Heart right ventricle (tissue), 16 donors: ENCODE measurements at regions of chr9 and their contacts with region 1.

Region 1: GRCh38 chr9:35790385-35791296 is 750 bp upstream of the NPR2 start:
- DNase-seq: peak; percentile 58 to 83
- ATAC-seq: peak; percentile 83 to 94 (median 92)
- H3K4me3 ChIP-seq: peak overlapping the region in 9 of 10 donors; percentile 56 to 78 (median 70)
- H3K27ac ChIP-seq: peak overlapping the region; percentile 2 to 90 (median 82)
- H3K4me1 ChIP-seq: peaks cover 16 to 47% (median 33%) of the 10 kb centered on the region in 9 donors
- H3K27me3 ChIP-seq: peaks cover 0 to 7% (median 0%) of the 10 kb centered on the region in 7 donors
- CTCF ChIP-seq: peak; percentile 71 to 91 (median 84)

Region 2: DNA sequence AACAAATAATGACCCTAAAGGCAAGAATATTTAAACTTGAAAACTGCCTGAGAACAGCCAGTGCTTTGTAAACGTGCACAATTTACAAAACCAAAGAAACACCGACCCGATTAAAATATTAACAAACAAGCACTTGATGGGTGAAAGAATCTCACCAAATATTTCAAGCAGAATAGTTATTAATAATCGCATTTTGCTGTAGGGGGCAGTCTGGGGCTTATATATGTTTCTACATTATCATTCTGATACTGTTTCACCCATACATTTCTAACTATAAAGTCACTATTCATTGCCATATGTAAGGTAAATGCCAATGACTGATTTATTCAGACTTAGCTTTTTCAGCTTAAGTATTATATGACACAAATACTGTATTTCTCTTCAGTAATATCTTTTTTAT is 1779.7 kb before region 1 on chr9:
- intact Hi-C with region 1: no loop called
- DNase-seq: no peak
- ATAC-seq: no peak
- H3K4me3 ChIP-seq: no peak overlapping the region
- H3K27ac ChIP-seq: no peak overlapping the region
- H3K4me1 ChIP-seq: no peaks in the 10 kb centered on the region
- H3K27me3 ChIP-seq: no peaks in the 10 kb centered on the region
- CTCF ChIP-seq: peak in 6 of 9 donors; percentile 28 to 51 (median 38)

Region 3: DNA sequence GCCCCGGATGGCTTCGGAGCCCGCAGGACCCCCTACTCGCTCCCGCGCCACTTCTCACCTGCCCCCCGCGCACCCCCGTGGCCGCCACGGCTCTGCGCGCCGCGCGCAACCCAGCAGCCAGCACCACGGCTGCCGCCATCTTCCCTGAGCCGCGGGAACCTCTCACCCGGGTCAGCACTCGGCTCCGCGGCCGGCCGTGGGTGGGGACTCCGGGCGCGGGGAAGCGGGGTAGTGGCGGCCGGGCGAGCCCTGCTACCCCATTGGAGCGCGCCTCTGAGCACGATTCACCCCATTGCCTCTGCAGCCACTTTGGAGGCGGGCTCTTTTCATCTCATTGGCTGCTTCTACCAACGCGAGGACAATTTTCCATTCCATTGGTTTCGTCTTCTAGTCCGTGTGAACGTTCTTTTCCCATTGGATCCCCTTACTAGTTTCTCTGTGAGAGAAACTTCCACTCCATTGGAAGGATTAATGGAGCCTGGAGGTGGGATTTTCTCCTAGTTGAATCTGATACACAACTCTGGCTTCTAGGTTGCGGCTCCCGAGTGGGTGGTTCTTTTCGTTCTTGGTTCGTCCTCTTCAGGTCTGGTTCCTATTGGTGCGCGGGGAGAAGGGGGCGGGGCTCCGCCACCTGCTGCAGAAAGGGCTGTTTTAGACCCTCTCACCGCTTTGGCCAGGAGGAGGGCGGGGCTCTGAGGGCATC is 24.4 kb after region 1 on chr9 and contains the start of gene HINT2:
- intact Hi-C with region 1: loop called in 3 of 10 experiments (anchors 1 to 5 kb)
- DNase-seq: peak; percentile 94 to 97
- ATAC-seq: peak; percentile 92 to 96 (median 95)
- H3K4me3 ChIP-seq: peak within 1 kb of the TSS; percentile 81 to 99 (median 94)
- H3K27ac ChIP-seq: peak within 1 kb of the TSS; percentile 97 to 100 (median 99)
- H3K4me1 ChIP-seq: peaks cover 0 to 43% (median 35%) of the 10 kb centered on the region in 9 donors
- H3K27me3 ChIP-seq: no peaks in the 10 kb centered on the region
- CTCF ChIP-seq: no peak
- total RNA-seq, gene HINT2: 56.8 to 83.1 (median 76.7) TPM

Region 4: GRCh38 chr9:35820076-35820475 is 29.4 kb after region 1 on chr9:
- intact Hi-C with region 1: loop called in 4 of 10 experiments (anchors 5 kb)
- DNase-seq: no peak
- ATAC-seq: no peak
- H3K4me3 ChIP-seq: no peak overlapping the region
- H3K27ac ChIP-seq: no peak overlapping the region
- H3K4me1 ChIP-seq: peaks cover 0 to 8% (median 5%) of the 10 kb centered on the region in 9 donors
- H3K27me3 ChIP-seq: no peaks in the 10 kb centered on the region
- CTCF ChIP-seq: no peak

Region 5: GRCh38 chr9:35829084-35829763 is 38.6 kb after region 1 on chr9 and contains the start of gene TMEM8B:
- intact Hi-C with region 1: loop called in 7 of 10 experiments (anchors 1 to 5 kb)
- DNase-seq: peak; percentile 96 to 98
- ATAC-seq: peak; percentile 91 to 94 (median 92)
- H3K4me3 ChIP-seq: peak within 1 kb of the TSS; percentile 70 to 87 (median 82)
- H3K27ac ChIP-seq: peak within 1 kb of the TSS; percentile 91 to 98 (median 96)
- H3K4me1 ChIP-seq: peaks cover 4 to 53% (median 39%) of the 10 kb centered on the region in 9 donors
- H3K27me3 ChIP-seq: no peaks in the 10 kb centered on the region
- CTCF ChIP-seq: no peak
- total RNA-seq, gene TMEM8B: 13.6 to 22.9 (median 20.5) TPM

Region 6: DNA sequence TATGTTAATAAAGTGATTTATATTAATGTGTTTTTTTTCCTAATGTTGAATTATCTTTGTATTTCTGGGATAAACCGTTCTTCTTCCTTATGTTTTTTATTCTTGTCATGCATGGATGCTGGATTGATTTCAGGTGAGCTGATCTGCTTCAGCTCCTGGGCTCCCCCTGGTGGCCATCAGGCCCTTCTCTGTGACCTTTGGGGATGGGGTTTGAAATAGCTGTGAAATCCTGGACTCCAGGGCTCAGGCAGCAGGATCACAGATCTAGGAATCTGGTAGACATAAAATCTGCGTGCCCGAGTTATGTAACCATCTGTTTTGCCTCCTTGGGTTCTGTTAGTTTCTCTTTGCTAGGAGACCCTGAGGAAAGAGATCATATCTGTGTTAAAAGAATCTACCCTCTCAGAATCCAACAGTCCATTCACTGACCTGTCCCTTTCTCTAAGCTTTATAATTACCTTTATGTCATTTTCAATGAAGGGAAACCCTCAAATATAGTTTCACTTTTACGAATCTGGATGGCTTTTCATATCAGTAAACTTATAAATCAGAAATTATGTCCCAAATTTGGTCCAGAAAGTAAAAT is 91.7 kb after region 1 on chr9:
- intact Hi-C with region 1: loop called (anchors 1 to 2 kb)
- DNase-seq: peak; percentile 84 to 87
- ATAC-seq: peak in 7 of 8 donors; percentile 81 to 92 (median 85)
- H3K4me3 ChIP-seq: no peak overlapping the region
- H3K27ac ChIP-seq: no peak overlapping the region
- H3K4me1 ChIP-seq: no peaks in the 10 kb centered on the region
- H3K27me3 ChIP-seq: peaks cover 0 to 9% (median 0%) of the 10 kb centered on the region in 7 donors
- CTCF ChIP-seq: peak; percentile 89 to 100 (median 98)

Region 7: GRCh38 chr9:35945341-35946018 is 154.8 kb after region 1 on chr9:
- intact Hi-C with region 1: loop called in 1 of 10 experiments (anchors 2 kb)
- DNase-seq: peak; percentile 85 to 86
- ATAC-seq: peak; percentile 75 to 85 (median 80)
- H3K4me3 ChIP-seq: peak overlapping the region in 6 of 10 donors; percentile 7 to 30 (median 18)
- H3K27ac ChIP-seq: peak overlapping the region in 9 of 10 donors; percentile 48 to 77 (median 73)
- H3K4me1 ChIP-seq: peaks cover 0 to 47% (median 26%) of the 10 kb centered on the region in 9 donors
- H3K27me3 ChIP-seq: no peaks in the 10 kb centered on the region
- CTCF ChIP-seq: peak; percentile 75 to 96 (median 86)

Region 8: GRCh38 chr9:36023260-36024048 is 232.8 kb after region 1 on chr9:
- intact Hi-C with region 1: loop called in 2 of 10 experiments (anchors 10 kb)
- DNase-seq: peak; percentile 29 to 62
- ATAC-seq: peak; percentile 17 to 72 (median 60)
- H3K4me3 ChIP-seq: no peak overlapping the region
- H3K27ac ChIP-seq: no peak overlapping the region
- H3K4me1 ChIP-seq: peaks cover 0 to 11% (median 0%) of the 10 kb centered on the region in 9 donors
- H3K27me3 ChIP-seq: no peaks in the 10 kb centered on the region
- CTCF ChIP-seq: peak; percentile 64 to 88 (median 83)